Activated naive CD4-positive, alpha-beta T cell treated with anti-CD3 and anti-CD28 coated beads for 36 hours (primary cell): ENCODE measurements at regions of chr5 and their contacts with region 1.

Region 1: DNA sequence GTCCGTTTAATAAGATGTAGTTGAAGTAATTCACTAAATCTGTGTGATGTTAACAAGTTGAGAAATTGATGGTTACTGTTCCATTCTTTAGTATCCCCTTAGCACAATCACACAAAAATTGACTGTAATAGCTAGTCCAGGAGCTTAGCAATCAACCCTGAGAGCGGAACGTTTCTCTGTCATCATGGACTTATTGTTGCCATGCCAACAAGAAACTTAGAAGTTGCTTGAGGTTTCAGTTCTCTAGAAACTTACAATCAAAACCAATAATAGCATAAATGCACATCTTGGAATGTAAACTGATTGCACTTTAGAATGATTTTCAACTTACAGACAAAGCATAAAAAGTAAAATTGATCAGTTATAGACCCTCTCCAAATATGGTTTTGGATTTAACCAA is 125.4 kb upstream of the ANKH start:
- DNase-seq: no peak
- H3K4me3 Mint-ChIP-seq: no peak overlapping the region
- H3K27ac Mint-ChIP-seq: no peak overlapping the region
- H3K4me1 Mint-ChIP-seq: peaks cover 14% of the 10 kb centered on the region
- H3K27me3 Mint-ChIP-seq: no peaks in the 10 kb centered on the region

Region 2: GRCh38 chr5:14142827-14143548 is 854.0 kb before region 1 on chr5 and contains the start of gene TRIO:
- CTCF ChIA-PET with region 1: no interaction called
- intact Hi-C with region 1: loop called (anchors 5 kb)
- DNase-seq: peak; percentile 79
- H3K4me3 Mint-ChIP-seq: peak within 1 kb of the TSS; percentile 78
- H3K27ac Mint-ChIP-seq: no peak within 1 kb of the TSS
- H3K4me1 Mint-ChIP-seq: peaks cover 11% of the 10 kb centered on the region
- H3K27me3 Mint-ChIP-seq: peaks cover 54% of the 10 kb centered on the region
- total RNA-seq, gene TRIO: 3.6 to 4.6 TPM

Region 3: DNA sequence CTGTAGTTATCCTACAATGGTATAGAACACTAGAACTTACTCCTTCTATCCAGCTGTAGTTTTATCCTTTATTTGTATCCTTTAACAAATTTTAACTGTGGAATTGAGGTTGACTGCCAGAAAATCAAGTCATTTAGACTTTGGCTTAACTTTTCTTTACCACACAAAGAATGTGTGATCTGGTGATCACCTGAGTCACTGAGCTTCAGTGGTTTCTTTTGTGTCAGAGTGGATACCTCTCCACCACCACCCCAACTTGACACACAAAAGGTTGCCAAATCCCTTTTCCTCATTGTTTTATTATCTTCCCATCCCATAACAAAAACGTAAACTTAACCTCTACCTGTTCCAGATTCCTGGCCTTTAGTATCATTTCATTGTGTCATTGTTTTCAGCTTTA is 327.0 kb before region 1 on chr5:
- CTCF ChIA-PET with region 1: interaction called, 3 read pairs
- intact Hi-C with region 1: loop called (anchors 1 kb)
- DNase-seq: peak; percentile 31
- H3K4me3 Mint-ChIP-seq: no peak overlapping the region
- H3K27ac Mint-ChIP-seq: peak overlapping the region; percentile 70
- H3K4me1 Mint-ChIP-seq: peaks cover 79% of the 10 kb centered on the region
- H3K27me3 Mint-ChIP-seq: no peaks in the 10 kb centered on the region

Region 4: DNA sequence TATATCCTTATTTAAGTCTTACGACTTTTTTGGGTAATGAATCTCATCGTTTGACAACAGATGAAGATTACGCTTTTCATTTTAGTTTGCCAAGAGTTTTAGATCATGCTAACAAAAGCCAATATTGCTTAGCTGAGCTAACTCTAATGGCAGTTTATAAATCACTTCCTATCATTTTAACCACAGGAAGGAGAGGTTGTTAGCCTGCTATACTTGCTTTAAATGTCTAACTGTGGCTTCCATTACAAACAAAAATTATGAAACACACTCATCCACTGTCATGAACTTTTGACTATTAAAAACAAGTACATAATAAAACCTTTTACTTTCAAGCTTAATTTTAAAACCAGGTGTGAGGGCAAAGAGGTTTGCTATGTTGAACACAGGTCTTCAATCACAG is 71.7 kb before region 1 on chr5:
- CTCF ChIA-PET with region 1: no interaction called
- intact Hi-C with region 1: loop called (anchors 2 kb)
- DNase-seq: no peak
- H3K4me3 Mint-ChIP-seq: peak overlapping the region; percentile 40
- H3K27ac Mint-ChIP-seq: peak overlapping the region; percentile 86
- H3K4me1 Mint-ChIP-seq: peaks cover 58% of the 10 kb centered on the region
- H3K27me3 Mint-ChIP-seq: no peaks in the 10 kb centered on the region

Region 5: GRCh38 chr5:16626663-16627264 is 1629.8 kb after region 1 on chr5:
- CTCF ChIA-PET with region 1: no interaction called
- intact Hi-C with region 1: loop called (anchors 5 kb)
- DNase-seq: peak; percentile 66
- H3K4me3 Mint-ChIP-seq: no peak overlapping the region
- H3K27ac Mint-ChIP-seq: peak overlapping the region; percentile 77
- H3K4me1 Mint-ChIP-seq: peaks cover 46% of the 10 kb centered on the region
- H3K27me3 Mint-ChIP-seq: no peaks in the 10 kb centered on the region